Activated T-helper 1 cell treated with anti-CD3 and anti-CD28 coated beads, Interleukin-12 subunit alpha, Interleukin-12 subunit beta, Interleukin-2, Interleukin-4 antibody, amounts not matched to agents 30 ng/mL and 10 ng/mL and 1 ng/mL, durations not matched to agents 14 hours and 24 hours and 36 hours (primary cell): ENCODE measurements at regions of chr18 and their contacts with region 1.

Region 1: GRCh38 chr18:58649966-58650816 is 21.1 kb upstream of the MALT1 start:
- DNase-seq: peak; percentile 73
- H3K4me3 Mint-ChIP-seq: peak overlapping the region; percentile 6
- H3K27ac Mint-ChIP-seq: peak overlapping the region; percentile 69
- H3K4me1 Mint-ChIP-seq: peaks cover 65% of the 10 kb centered on the region
- H3K27me3 Mint-ChIP-seq: no peaks in the 10 kb centered on the region

Region 2: GRCh38 chr18:58639751-58640427 is 10.3 kb before region 1 on chr18:
- intact Hi-C with region 1: loop called (anchors 1 kb)
- DNase-seq: no peak
- H3K4me3 Mint-ChIP-seq: no peak overlapping the region
- H3K27ac Mint-ChIP-seq: no peak overlapping the region
- H3K4me1 Mint-ChIP-seq: peaks cover 33% of the 10 kb centered on the region
- H3K27me3 Mint-ChIP-seq: no peaks in the 10 kb centered on the region

Region 3: GRCh38 chr18:58661423-58661822 is 11.2 kb after region 1 on chr18:
- intact Hi-C with region 1: loop called (anchors 1 kb)
- DNase-seq: no peak
- H3K4me3 Mint-ChIP-seq: no peak overlapping the region
- H3K27ac Mint-ChIP-seq: no peak overlapping the region
- H3K4me1 Mint-ChIP-seq: peaks cover 37% of the 10 kb centered on the region
- H3K27me3 Mint-ChIP-seq: peaks cover 2% of the 10 kb centered on the region

Region 4: GRCh38 chr18:58687871-58688308 is 37.7 kb after region 1 on chr18:
- intact Hi-C with region 1: loop called (anchors 1 kb)
- DNase-seq: peak; percentile 68
- H3K4me3 Mint-ChIP-seq: peak overlapping the region; percentile 53
- H3K27ac Mint-ChIP-seq: peak overlapping the region; percentile 83
- H3K4me1 Mint-ChIP-seq: peaks cover 60% of the 10 kb centered on the region
- H3K27me3 Mint-ChIP-seq: no peaks in the 10 kb centered on the region